K562 (cell line): ENCODE measurements at regions of chr12 and their contacts with region 1.

Region 1: DNA sequence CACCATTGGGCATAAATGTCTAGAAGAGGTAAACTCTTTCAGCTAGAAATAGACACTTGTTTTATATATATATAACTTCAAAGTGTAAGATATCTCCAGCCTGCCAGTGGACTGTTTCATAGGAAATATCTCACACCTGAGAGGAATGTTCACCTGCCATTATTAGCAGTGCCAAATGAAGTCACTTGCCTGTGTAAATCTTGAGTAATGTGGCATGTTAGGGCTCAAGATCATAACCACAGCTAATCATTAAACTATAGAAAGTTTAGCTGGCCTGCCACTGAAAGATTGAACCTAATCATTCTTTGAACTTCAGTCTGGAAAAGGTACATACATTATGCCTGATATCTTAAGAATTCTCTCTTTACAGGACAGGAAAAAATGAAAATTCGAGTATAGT is 25.5 kb upstream of the KCNJ8 start:
- DNase-seq: no peak
- ATAC-seq: no peak
- H3K4me3 ChIP-seq: no peak overlapping the region
- H3K27ac ChIP-seq: no peak overlapping the region
- H3K4me1 ChIP-seq: no peaks in the 10 kb centered on the region; a peak in 1 of 5 replicates
- H3K27me3 ChIP-seq: no peaks in the 10 kb centered on the region
- CTCF ChIP-seq: no peak
- EP300 ChIP-seq: no peak
- POLR2A ChIP-seq: no peak
- RAD21 ChIP-seq: no peak

Region 2: DNA sequence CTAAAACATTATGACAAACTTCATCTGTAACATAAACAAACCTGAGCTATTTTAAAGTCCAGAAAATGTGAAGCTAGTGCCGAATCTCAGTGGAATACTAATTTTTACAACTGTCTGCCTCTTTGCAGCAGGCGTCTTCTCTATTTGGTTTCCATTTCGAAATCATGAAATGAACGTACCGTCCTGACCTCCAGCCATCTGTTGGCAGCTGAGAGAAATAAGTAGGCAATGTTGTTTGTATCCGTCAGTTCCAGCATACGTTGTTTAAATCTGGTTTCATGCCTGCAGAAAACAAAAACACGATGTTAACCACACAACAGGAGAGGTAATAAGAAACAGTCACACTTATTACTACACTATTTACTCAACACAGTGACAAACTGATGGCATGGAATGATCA is 28.8 kb after region 1 on chr12:
- CTCF ChIA-PET with region 1: no interaction called
- POLR2A ChIA-PET with region 1: no interaction called
- in situ Hi-C with region 1: no loop called
- intact Hi-C with region 1: loop called (anchors 2 kb)
- DNase-seq: no peak
- ATAC-seq: no peak
- H3K4me3 ChIP-seq: no peak overlapping the region
- H3K27ac ChIP-seq: no peak overlapping the region
- H3K4me1 ChIP-seq: no peaks in the 10 kb centered on the region
- H3K27me3 ChIP-seq: no peaks in the 10 kb centered on the region
- CTCF ChIP-seq: no peak
- EP300 ChIP-seq: no peak
- POLR2A ChIP-seq: no peak
- RAD21 ChIP-seq: no peak